Cardiac septum (tissue), 1 donor: ENCODE measurements at regions of chr16 and their contacts with region 1.

Region 1: GRCh38 chr16:69796351-69797118 is 34.4 kb downstream of the WWP2 start:
- DNase-seq: no peak

Region 2: DNA sequence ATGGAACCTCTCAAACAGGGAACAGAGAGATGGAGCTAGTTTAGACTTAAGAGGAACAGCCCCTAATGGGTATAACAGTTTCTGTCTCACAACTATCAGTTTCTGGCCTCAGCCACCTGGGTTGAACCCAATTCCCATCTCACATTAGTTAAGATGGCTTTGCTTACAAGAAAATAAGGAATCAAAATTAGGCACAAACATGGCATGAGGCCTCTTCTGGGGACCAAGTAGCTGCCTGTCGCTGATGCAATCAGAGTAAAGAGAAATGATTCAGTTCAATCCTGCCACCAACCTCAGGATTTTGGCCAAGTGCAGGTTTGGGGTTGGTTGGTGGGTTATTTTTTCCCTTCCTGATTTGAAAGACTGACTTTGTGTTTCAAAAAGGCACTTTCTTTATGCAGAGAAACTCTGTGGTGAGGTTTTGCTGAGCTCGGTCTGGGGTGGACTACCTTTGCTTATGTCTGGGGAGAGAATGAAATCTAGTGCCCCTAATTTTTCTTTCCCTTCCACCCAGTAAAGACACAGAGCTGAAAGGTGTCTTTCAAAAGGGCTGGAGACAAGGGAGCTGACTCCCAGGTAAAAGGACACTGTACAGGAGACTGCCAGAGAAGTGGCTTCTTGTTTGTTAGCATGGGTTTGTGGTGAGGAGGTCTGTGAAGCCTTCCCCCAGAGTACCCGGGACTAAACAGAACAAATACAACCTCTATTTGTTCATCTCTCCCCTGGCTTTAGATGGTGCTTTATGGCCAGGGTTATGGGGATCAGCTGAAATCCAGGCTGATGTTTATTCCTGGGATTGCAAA is 275.5 kb before region 1 on chr16:
- intact Hi-C with region 1: no loop called
- DNase-seq: no peak

Region 3: GRCh38 chr16:69812688-69813014 is 16.1 kb after region 1 on chr16:
- intact Hi-C with region 1: no loop called
- DNase-seq: no peak

Region 4: DNA sequence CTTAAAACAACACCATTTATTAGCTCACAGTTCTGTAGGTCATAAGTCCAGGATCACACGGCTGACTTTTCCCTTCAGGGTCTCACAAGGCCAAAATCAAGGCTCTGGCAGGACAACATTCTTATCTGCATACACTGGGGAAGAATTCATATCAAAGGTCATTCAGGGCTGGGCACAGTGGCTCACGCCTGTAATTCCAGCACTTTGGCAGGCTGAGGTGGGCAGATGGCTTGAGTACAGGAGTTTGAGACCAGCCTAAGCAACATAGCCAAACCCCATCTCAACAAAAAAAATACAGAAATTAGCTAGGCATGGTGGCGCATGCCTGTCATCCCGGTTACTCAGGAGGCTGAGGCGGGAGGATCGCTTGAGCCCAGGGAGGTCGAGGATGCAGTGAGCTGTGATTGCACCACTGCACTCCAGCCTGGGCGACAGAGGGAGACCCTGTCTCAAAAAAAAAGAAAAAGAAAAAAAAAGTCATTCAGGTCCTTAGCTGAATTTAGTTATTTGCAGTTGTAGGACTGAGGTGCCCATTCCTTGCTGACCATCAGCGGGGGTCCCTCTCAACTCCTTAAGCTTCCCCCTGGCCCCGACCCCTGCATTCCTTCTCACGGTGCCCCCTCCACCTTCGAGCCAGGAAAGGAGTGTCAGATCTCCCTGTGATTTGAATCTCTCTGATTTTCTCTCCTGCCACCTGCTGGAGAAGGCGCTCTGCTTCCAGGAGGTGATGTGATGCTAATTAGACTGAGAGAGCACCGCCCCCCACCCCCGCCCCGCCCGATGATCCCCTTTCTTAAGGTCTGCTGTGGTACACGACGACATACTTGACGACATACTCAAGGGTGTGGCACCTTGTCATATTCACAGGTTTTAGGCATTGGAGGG is 62.8 kb after region 1 on chr16:
- intact Hi-C with region 1: loop called (anchors 5 kb)
- DNase-seq: no peak

Region 5: DNA sequence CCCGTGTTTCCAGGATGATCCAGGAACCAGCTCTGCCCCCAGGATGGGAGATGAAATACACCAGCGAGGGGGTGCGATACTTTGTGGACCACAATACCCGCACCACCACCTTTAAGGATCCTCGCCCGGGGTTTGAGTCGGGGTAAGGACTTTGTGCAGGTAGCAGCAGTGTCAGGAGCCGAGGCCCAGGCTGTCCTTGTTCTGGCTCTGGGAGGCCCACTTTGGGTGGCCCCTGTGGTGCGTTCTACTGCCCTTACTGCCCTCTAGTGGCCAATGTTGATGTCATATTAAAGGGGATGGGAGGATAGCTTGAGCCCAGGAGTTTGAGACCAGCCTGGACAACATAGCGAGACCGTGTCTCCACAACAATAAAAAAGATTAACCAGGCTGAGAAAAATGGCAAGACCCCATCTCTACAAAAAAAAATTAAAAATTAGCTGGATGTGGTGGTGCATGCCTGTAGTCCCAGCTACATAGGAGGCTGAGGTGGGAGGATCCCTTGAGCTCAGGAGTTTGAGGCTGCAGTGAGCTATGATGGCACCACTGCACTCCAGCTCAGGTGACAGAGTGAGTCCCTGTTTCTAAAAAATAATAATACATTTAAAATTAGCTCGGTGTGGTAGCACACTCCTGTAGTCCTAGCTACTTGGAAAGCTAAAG is 133.7 kb after region 1 on chr16:
- intact Hi-C with region 1: loop called (anchors 1 kb)
- DNase-seq: peak; percentile 78